ENCODE measurements at regions of chr11 and their contacts with region 1.

Region 1: DNA sequence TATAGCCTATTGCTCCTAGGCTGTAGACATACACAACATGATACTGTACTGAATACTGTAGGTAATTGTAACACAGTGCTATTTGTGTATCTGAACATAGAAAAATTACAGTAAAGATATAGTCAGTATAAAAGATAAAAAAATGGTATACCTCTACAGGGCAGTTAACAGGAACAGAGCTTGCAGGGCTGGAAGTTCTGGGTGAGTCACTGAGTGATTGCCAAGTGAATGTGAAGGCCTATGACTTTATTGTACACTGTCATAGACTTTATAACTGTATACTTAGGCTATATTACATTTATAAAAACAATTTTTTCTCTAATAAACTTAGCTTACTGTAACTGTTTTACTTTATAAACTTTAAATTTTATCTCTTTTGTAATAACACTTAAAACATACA is 332.4 kb upstream of the ARHGAP42 start:
- DNase-seq: no peak
- ATAC-seq: no peak

Region 2: DNA sequence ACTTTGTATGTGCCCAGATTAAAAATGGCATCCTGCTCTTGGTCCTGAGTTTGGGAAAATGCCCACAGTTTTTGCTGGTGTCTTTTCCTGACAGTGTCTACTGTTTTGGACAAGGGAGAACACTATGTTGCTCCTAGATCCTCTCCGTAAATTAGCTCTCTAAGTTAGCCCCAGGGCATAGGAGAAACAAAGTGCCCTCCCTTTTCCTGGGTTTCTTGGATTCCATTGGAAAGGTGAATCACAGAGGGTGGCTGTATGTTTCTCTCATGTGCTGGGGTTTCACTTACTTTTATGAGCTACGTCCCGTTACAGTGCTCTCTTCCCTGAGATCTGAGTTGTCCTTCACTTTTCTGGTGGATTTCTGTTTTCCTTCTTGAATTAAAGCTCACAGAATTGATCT is 551.2 kb before region 1 on chr11:
- intact Hi-C with region 1: no loop called
- DNase-seq: no peak
- ATAC-seq: no peak

Region 3: DNA sequence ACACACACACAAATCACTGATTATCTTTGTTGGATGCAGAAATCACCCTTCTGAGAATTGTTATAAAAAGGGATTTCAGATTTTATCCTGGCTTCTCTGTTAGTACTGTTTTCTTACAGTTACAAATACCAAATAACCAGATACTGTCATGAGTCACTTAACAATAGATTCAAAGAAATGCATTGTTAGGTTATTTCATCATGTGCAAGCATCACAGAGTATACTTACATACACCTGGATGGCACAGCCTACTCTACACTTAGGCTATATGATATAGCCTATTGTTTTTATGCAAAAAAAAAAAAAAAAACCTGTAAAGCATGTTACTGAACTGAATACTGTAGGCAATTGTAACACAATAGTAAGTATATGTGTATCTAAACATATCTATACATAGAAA is 13.2 kb after region 1 on chr11:
- intact Hi-C with region 1: loop called (anchors 1 kb)
- DNase-seq: no peak
- ATAC-seq: no peak

Region 4: GRCh38 chr11:100753172-100753543 is 398.4 kb after region 1 on chr11:
- intact Hi-C with region 1: no loop called
- DNase-seq: no peak
- ATAC-seq: peak; percentile 29